ENCODE measurements at regions of chr1 and their contacts with region 1.

Region 1: GRCh38 chr1:64864018-64864940 is 102.1 kb downstream of the JAK1 start:
- DNase-seq: no peak
- H3K4me3 ChIP-seq: no peak overlapping the region
- H3K27ac ChIP-seq: no peak overlapping the region
- H3K4me1 ChIP-seq: no peaks in the 10 kb centered on the region
- H3K27me3 ChIP-seq: no peaks in the 10 kb centered on the region
- CTCF ChIP-seq: no peak
- EP300 ChIP-seq: no peak
- POLR2A ChIP-seq: no peak

Region 2: GRCh38 chr1:65075123-65075976 is 211.1 kb after region 1 on chr1:
- intact Hi-C with region 1: loop called in 2 of 4 experiments (anchors 10 kb)
- DNase-seq: peak in 3 of 5 donors; percentile 46 to 71 (median 58)
- H3K4me3 ChIP-seq: no peak overlapping the region
- H3K27ac ChIP-seq: no peak overlapping the region
- H3K4me1 ChIP-seq: no peaks in the 10 kb centered on the region
- H3K27me3 ChIP-seq: no peaks in the 10 kb centered on the region
- CTCF ChIP-seq: peak; percentile 43 to 53 (median 50)
- EP300 ChIP-seq: no peak
- POLR2A ChIP-seq: no peak

Region 3: GRCh38 chr1:65083263-65083896 is 219.1 kb after region 1 on chr1:
- intact Hi-C with region 1: loop called in 2 of 4 experiments (anchors 10 kb)
- DNase-seq: no peak
- H3K4me3 ChIP-seq: no peak overlapping the region
- H3K27ac ChIP-seq: no peak overlapping the region
- H3K4me1 ChIP-seq: no peaks in the 10 kb centered on the region
- H3K27me3 ChIP-seq: no peaks in the 10 kb centered on the region
- CTCF ChIP-seq: no peak
- EP300 ChIP-seq: no peak
- POLR2A ChIP-seq: no peak